AG04450 (cell line): ENCODE measurements at regions of chr1 and their contacts with region 1.

Region 1: GRCh38 chr1:203526130-203526529 is 32.2 kb downstream of the OPTC start:
- DNase-seq: no peak
- H3K4me3 ChIP-seq: no peak overlapping the region
- H3K27ac ChIP-seq: no peak overlapping the region
- H3K27me3 ChIP-seq: no peaks in the 10 kb centered on the region
- CTCF ChIP-seq: no peak

Region 2: DNA sequence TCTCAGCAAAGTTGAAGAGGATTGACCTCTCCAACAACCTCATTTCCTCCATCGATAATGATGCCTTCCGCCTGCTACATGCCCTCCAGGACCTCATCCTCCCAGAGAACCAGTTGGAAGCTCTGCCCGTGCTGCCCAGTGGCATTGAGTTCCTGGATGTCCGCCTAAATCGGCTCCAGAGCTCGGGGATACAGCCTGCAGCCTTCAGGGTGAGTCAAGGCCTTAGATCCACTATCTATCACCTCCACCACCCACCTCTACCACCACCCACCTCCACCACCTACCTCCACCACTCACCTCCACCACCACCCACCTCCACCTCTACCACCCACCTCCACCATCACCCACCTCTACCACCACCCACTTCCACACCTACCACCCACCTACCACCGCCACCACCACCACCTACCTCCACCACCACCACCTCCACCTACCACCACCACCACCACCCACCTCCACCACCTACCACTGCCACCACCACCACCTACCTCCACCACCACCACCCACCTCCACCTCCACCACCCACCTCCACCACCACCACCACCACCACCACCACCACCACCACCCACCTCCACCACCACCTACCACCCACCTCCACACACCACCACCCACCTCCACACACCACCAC is 26.4 kb before region 1 on chr1:
- CTCF ChIA-PET with region 1: no interaction called
- POLR2A ChIA-PET with region 1: no interaction called
- DNase-seq: no peak
- H3K4me3 ChIP-seq: no peak overlapping the region
- H3K27ac ChIP-seq: no peak overlapping the region
- H3K27me3 ChIP-seq: no peaks in the 10 kb centered on the region
- CTCF ChIP-seq: no peak

Region 3: GRCh38 chr1:203539831-203540546 is 13.9 kb after region 1 on chr1:
- CTCF ChIA-PET with region 1: interaction called, 3 read pairs
- POLR2A ChIA-PET with region 1: interaction called, 10 read pairs
- DNase-seq: no peak
- H3K4me3 ChIP-seq: no peak overlapping the region
- H3K27ac ChIP-seq: no peak overlapping the region
- H3K27me3 ChIP-seq: no peaks in the 10 kb centered on the region
- CTCF ChIP-seq: no peak